Caco-2 (cell line): ENCODE measurements at regions of chr4 and their contacts with region 1.

Region 1: DNA sequence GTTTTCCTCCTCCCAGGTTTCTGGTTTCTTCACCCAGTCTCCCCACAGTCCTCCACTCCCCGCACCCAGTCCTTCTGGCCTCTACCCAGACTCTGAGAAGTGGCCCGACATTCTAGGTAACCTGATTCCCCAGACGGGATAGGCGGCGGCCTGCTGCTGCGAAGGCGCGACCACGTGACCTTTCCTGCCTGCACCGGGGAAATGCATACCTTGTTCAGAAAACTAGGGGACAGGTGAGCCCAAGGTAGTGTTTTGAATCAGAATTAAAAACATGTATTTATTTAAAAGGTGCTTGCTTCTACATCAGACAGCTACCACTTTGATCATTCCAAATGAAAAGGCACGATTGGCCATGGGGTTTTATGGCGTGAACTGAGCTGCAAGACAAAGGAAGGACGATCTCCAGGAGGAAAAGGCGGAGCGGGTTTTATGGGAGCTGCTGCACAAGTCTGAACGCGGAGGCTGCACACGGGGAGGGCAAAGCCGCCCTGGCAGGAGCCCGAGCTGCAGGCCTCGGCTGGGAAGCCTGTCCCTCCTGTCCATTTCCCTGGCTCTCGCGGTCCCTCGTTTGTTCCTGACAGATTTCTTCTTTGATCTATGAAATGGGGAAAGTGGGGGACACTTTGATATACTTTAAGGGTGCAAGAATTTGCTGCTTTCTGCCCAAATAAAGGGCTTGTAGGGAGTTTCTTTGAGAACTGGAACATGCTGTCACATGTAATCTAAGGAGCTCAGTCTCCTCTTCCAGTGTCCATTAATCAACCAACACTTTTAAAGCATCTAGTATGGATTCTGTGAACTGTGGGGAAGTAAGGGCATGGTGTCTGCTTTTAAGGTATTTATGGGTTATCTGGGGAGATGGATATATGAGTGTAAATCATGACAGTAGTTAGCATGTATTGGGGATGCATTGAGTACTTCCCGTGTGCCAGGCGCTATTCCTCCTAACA is 150.9 kb downstream of the SPRY1 start:
- DNase-seq: peak; percentile 85 to 90
- H3K4me3 ChIP-seq: peak overlapping the region; percentile 31
- H3K4me3 Mint-ChIP-seq: peak overlapping the region; percentile 85
- H3K27ac Mint-ChIP-seq: peak overlapping the region; percentile 94
- H3K4me1 ChIP-seq: peaks cover 33% of the 10 kb centered on the region
- H3K4me1 Mint-ChIP-seq: peaks cover 23% of the 10 kb centered on the region
- H3K27me3 ChIP-seq: no peaks in the 10 kb centered on the region
- H3K27me3 Mint-ChIP-seq: no peaks in the 10 kb centered on the region
- CTCF ChIP-seq: no peak

Region 2: GRCh38 chr4:123418351-123418931 is 129.1 kb before region 1 on chr4:
- CTCF ChIA-PET with region 1: no interaction called
- POLR2A ChIA-PET with region 1: no interaction called
- intact Hi-C with region 1: loop called (anchors 5 kb)
- DNase-seq: peak; percentile 51 to 59
- H3K4me3 ChIP-seq: no peak overlapping the region
- H3K4me3 Mint-ChIP-seq: no peak overlapping the region
- H3K27ac Mint-ChIP-seq: peak overlapping the region; percentile 73
- H3K4me1 ChIP-seq: peaks cover 36% of the 10 kb centered on the region
- H3K4me1 Mint-ChIP-seq: peaks cover 25% of the 10 kb centered on the region
- H3K27me3 ChIP-seq: no peaks in the 10 kb centered on the region
- H3K27me3 Mint-ChIP-seq: no peaks in the 10 kb centered on the region
- CTCF ChIP-seq: no peak

Region 3: GRCh38 chr4:123444290-123444731 is 103.2 kb before region 1 on chr4:
- CTCF ChIA-PET with region 1: interaction called, 3 read pairs
- POLR2A ChIA-PET with region 1: interaction called, 3 read pairs
- intact Hi-C with region 1: loop called (anchors 1 kb)
- DNase-seq: peak; percentile 82 to 90
- H3K4me3 ChIP-seq: peak overlapping the region; percentile 10; the same call in 1 of the 2 replicates
- H3K4me3 Mint-ChIP-seq: peak overlapping the region; percentile 49
- H3K27ac Mint-ChIP-seq: peak overlapping the region; percentile 40
- H3K4me1 ChIP-seq: peaks cover 19% of the 10 kb centered on the region
- H3K4me1 Mint-ChIP-seq: peaks cover 3% of the 10 kb centered on the region
- H3K27me3 ChIP-seq: no peaks in the 10 kb centered on the region
- H3K27me3 Mint-ChIP-seq: no peaks in the 10 kb centered on the region
- CTCF ChIP-seq: no peak

Region 4: GRCh38 chr4:123505095-123506010 is 42.1 kb before region 1 on chr4:
- CTCF ChIA-PET with region 1: no interaction called
- POLR2A ChIA-PET with region 1: no interaction called
- intact Hi-C with region 1: loop called (anchors 1 kb)
- DNase-seq: peak; percentile 76 to 80
- H3K4me3 ChIP-seq: peak overlapping the region; percentile 40
- H3K4me3 Mint-ChIP-seq: peak overlapping the region; percentile 79
- H3K27ac Mint-ChIP-seq: peak overlapping the region; percentile 91
- H3K4me1 ChIP-seq: peaks cover 30% of the 10 kb centered on the region
- H3K4me1 Mint-ChIP-seq: peaks cover 13% of the 10 kb centered on the region
- H3K27me3 ChIP-seq: no peaks in the 10 kb centered on the region
- H3K27me3 Mint-ChIP-seq: no peaks in the 10 kb centered on the region
- CTCF ChIP-seq: no peak

Region 5: DNA sequence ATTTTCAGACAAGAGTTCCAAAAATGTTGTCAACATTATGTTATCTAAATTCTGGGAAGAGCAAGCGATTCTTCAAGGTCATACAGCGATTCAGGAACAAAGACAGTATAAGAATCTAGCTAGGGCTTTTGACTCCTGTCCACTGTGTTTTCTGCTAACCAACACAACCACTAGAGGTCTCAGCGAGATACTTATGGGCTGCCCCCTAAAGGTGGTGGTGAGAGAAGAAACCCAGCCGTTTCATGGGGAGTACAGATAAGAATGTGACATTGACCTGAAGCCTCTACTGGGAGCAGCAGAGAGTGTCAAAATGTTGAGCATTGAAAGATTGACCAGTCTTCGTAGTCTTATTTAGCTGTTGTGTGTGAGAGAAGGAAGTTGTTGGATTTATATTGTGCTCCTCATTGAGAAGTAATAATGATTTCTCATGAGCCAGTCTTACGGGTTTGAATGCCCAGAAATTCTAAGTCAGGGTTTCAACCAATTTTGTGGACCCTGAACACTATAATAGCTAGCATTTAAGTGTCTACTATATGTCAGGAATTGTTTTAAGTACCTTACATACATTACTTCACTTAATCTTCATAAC is 17.4 kb after region 1 on chr4:
- CTCF ChIA-PET with region 1: interaction called, 3 read pairs
- POLR2A ChIA-PET with region 1: no interaction called
- intact Hi-C with region 1: loop called (anchors 1 kb)
- DNase-seq: peak; percentile 80 to 81
- H3K4me3 ChIP-seq: no peak overlapping the region
- H3K4me3 Mint-ChIP-seq: no peak overlapping the region
- H3K27ac Mint-ChIP-seq: no peak overlapping the region
- H3K4me1 ChIP-seq: peaks cover 20% of the 10 kb centered on the region
- H3K4me1 Mint-ChIP-seq: peaks cover 22% of the 10 kb centered on the region
- H3K27me3 ChIP-seq: no peaks in the 10 kb centered on the region
- H3K27me3 Mint-ChIP-seq: no peaks in the 10 kb centered on the region
- CTCF ChIP-seq: peak; percentile 88 to 99

Region 6: GRCh38 chr4:123649645-123650391 is 102.3 kb after region 1 on chr4:
- CTCF ChIA-PET with region 1: interaction called, 3 read pairs
- POLR2A ChIA-PET with region 1: no interaction called
- intact Hi-C with region 1: loop called (anchors 1 kb)
- DNase-seq: peak; percentile 70 to 78
- H3K4me3 ChIP-seq: peak overlapping the region; percentile 18
- H3K4me3 Mint-ChIP-seq: peak overlapping the region; percentile 69
- H3K27ac Mint-ChIP-seq: peak overlapping the region; percentile 96
- H3K4me1 ChIP-seq: peaks cover 18% of the 10 kb centered on the region
- H3K4me1 Mint-ChIP-seq: peaks cover 7% of the 10 kb centered on the region
- H3K27me3 ChIP-seq: no peaks in the 10 kb centered on the region
- H3K27me3 Mint-ChIP-seq: no peaks in the 10 kb centered on the region
- CTCF ChIP-seq: no peak